IMR-90 (cell line): ENCODE measurements at regions of chr22 and their contacts with region 1.

Region 1: GRCh38 chr22:29040385-29041275 is 21.0 kb downstream of the C22orf31 start:
- DNase-seq: peak; percentile 93
- ATAC-seq: peak; percentile 75
- H3K4me3 ChIP-seq: no peak overlapping the region
- H3K27ac ChIP-seq: no peak overlapping the region
- H3K4me1 ChIP-seq: peaks cover 12% of the 10 kb centered on the region
- H3K27me3 ChIP-seq: no peaks in the 10 kb centered on the region
- CTCF ChIP-seq: peak; percentile 99
- POLR2A ChIP-seq: peak; percentile 51; the same call in 1 of the 2 replicates
- RAD21 ChIP-seq: peak; percentile 94

Region 2: DNA sequence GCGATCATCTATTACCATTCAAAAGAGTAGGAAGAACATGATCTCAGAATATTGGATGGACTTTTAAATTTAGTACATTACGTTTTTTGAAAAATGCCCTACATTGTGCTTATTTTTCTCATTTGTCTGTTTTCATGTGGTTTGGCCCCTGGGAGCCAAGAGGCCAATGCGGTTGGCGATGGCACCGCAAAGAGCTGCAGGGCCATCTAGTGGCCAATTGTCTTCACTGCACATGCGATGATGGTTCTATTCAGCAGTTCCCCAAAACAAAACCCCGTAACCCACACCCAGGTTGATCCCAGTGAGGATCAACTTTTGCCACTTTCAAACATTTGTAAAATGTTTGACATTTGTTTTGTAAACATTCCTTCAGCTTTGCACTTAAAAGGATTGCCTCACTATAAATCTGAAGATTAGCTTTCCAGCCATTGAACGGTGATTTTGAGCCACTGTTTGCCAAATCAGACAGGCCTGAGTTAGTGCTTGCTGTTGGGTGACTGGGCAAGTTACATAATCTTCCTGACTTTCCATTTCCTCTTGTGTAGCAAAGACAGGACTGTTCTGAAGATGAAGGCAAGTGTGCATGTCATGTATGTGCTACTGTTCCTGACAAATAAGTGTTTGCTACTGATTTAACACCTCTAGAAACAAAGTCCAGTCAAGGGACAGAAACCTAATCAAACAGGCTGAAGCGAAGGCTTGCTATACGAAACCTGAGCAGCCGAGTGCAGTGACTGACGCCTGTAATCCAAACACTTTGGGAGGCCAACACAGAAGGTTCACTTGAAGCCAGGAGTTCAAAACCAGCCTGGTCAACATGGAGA is 211.1 kb before region 1 on chr22:
- CTCF ChIA-PET with region 1: interaction called, 3 read pairs
- POLR2A ChIA-PET with region 1: no interaction called
- dilution Hi-C with region 1: no loop called
- in situ Hi-C with region 1: no loop called
- intact Hi-C with region 1: loop called (anchors 1 kb)
- DNase-seq: peak; percentile 73
- ATAC-seq: peak; percentile 97
- H3K4me3 ChIP-seq: no peak overlapping the region
- H3K27ac ChIP-seq: no peak overlapping the region
- H3K4me1 ChIP-seq: no peaks in the 10 kb centered on the region
- H3K27me3 ChIP-seq: no peaks in the 10 kb centered on the region
- CTCF ChIP-seq: peak; percentile 97
- POLR2A ChIP-seq: no peak; the same call in 1 of the 2 replicates
- RAD21 ChIP-seq: peak; percentile 94

Region 3: DNA sequence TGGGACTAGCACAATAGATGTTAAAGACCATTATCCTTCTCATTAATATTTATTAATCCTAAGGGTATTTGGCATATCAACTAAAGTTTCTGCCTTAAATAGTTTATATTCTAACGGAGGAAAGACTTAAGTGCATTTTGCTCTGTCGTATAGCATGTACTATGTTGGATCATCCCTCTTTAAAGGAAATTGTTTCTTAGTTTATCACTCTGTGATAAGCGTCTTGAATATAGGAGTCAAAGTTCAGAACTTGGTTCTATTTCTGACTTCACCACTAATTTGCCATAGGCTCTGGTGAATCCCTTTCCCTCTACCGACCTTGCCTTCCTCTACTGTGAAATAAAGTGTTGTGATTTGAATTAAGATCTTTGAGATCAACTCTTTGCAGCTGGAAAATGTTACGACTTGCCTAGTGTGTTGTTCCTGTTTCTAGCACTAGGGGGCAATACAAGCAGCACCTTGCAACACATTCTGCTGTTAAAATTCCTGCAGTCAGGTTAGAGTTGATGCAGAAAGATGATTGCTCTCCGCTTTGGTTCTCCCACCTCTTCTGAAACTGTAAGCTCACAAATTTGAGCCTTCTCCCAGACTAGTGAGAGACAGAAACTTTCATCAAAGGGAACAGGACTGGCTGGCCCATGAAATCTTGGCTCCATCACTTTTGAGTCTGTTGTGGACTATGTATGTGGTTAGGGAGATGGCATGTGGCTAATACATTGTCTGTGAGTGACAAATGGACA is 185.1 kb before region 1 on chr22:
- CTCF ChIA-PET with region 1: interaction called, 21 read pairs
- POLR2A ChIA-PET with region 1: no interaction called
- dilution Hi-C with region 1: no loop called
- in situ Hi-C with region 1: loop called (anchors 5 kb)
- intact Hi-C with region 1: loop called (anchors 1 kb)
- DNase-seq: peak; percentile 78
- ATAC-seq: peak; percentile 96
- H3K4me3 ChIP-seq: no peak overlapping the region
- H3K27ac ChIP-seq: no peak overlapping the region
- H3K4me1 ChIP-seq: no peaks in the 10 kb centered on the region
- H3K27me3 ChIP-seq: no peaks in the 10 kb centered on the region
- CTCF ChIP-seq: peak; percentile 88
- POLR2A ChIP-seq: no peak
- RAD21 ChIP-seq: peak; percentile 92

Region 4: GRCh38 chr22:28882878-28883656 is 157.6 kb before region 1 on chr22 and contains the start of gene ZNRF3:
- CTCF ChIA-PET with region 1: interaction called, 4 read pairs
- POLR2A ChIA-PET with region 1: no interaction called
- dilution Hi-C with region 1: no loop called
- in situ Hi-C with region 1: no loop called
- intact Hi-C with region 1: loop called (anchors 1 kb)
- DNase-seq: peak; percentile 91
- ATAC-seq: peak; percentile 97
- H3K4me3 ChIP-seq: peak within 1 kb of the TSS; percentile 92
- H3K27ac ChIP-seq: peak within 1 kb of the TSS; percentile 63; the same call in 1 of the 2 replicates
- H3K4me1 ChIP-seq: peaks cover 16% of the 10 kb centered on the region
- H3K27me3 ChIP-seq: no peaks in the 10 kb centered on the region
- CTCF ChIP-seq: no peak
- POLR2A ChIP-seq: 0 out of 2 replicates have a peak, but pooled peaks have one; percentile 41
- RAD21 ChIP-seq: no peak
- total RNA-seq, gene ZNRF3: 1.4 TPM in 2 replicates

Region 5: GRCh38 chr22:29154364-29155048 is 113.9 kb after region 1 on chr22:
- CTCF ChIA-PET with region 1: interaction called, 3 read pairs
- POLR2A ChIA-PET with region 1: no interaction called
- dilution Hi-C with region 1: no loop called
- in situ Hi-C with region 1: no loop called
- intact Hi-C with region 1: loop called (anchors 1 kb)
- DNase-seq: peak; percentile 51
- ATAC-seq: peak; percentile 95
- H3K4me3 ChIP-seq: no peak overlapping the region
- H3K27ac ChIP-seq: no peak overlapping the region
- H3K4me1 ChIP-seq: no peaks in the 10 kb centered on the region; the same call in 1 of the 2 replicates
- H3K27me3 ChIP-seq: peaks cover under 1% of the 10 kb centered on the region
- CTCF ChIP-seq: peak; percentile 91
- POLR2A ChIP-seq: no peak
- RAD21 ChIP-seq: peak; percentile 83

Region 6: DNA sequence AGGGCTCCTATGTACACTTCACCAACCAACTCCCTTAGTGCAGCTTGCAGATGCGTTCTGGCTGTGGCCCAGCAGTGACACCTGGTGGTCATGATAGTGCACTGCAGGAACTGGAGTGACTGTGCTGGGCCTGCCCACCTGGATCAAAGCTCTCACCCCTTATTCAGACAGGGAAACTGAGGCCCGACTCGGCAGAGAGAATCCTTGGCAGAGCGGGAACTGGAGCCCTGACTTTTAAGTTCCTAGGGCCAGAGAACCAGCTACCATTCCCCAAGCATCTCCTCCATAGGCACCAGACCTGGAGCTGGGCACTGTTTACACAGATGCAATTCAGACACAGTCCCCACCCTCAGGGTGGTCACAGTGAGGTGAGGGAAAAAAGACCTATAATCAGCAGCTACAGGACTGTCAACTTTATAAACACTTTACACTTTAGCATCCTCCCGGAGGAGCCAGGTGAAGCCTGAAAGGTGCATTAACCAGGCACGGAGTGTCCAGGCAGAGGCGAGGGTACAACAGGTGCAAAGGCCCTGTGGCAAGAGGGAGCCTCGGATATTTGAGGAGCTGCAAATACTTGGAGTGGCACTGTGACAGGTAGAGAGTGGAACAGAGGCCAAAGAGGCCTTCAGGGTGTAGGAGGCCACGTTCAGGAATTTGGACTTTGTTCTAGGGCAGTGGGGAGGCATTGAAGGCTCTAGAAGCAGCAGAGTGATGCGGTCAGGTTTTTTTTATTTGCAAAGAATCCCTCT is 205.2 kb after region 1 on chr22:
- CTCF ChIA-PET with region 1: interaction called, 3 read pairs
- POLR2A ChIA-PET with region 1: no interaction called
- dilution Hi-C with region 1: no loop called
- in situ Hi-C with region 1: loop called (anchors 10 kb)
- intact Hi-C with region 1: loop called (anchors 1 kb)
- DNase-seq: peak; percentile 54
- ATAC-seq: peak; percentile 100
- H3K4me3 ChIP-seq: no peak overlapping the region
- H3K27ac ChIP-seq: no peak overlapping the region
- H3K4me1 ChIP-seq: no peaks in the 10 kb centered on the region
- H3K27me3 ChIP-seq: peaks cover 4% of the 10 kb centered on the region
- CTCF ChIP-seq: peak; percentile 95
- POLR2A ChIP-seq: no peak
- RAD21 ChIP-seq: peak; percentile 96